G401 (cell line): ENCODE measurements at regions of chr11 and their contacts with region 1.

Region 1: DNA sequence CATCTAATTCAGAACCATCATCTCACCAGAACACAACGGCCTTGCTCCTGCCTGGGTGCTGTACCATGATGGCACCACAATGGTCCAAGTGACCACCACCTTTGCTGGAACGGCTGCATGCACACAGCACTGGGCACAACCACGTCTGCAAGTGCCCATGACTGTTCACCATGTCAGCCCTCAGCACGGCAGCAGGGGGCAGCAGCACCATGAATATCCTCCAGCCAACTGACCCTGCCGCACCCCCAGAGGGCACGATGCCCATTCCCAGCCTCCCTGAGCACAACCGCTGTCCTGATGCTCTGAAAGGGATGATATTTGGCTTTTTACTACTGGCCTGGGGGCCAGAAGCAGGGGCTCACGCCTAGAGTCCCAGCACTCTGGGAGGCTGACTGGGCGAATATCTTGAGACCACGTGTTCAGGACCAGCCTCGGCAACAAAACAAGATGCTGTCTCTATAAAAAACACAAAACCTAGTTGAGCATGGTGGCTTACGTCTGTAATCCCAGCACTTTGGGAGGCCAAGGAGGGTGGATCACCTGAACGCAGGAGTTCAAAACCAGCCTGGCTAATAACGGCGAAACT is 25.7 kb downstream of the DRD4 start:
- DNase-seq: peak; percentile 61

Region 2: GRCh38 chr11:765025-765801 is 102.4 kb after region 1 on chr11:
- in situ Hi-C with region 1: loop called (anchors 25 kb)
- DNase-seq: peak; percentile 66